Gastrocnemius medialis (tissue), 4 donors: ENCODE measurements at regions of chr7 and their contacts with region 1.

Region 1: GRCh38 chr7:1193593-1194424 is 33.8 kb upstream of the ZFAND2A start:
- DNase-seq: no peak
- ATAC-seq: no peak
- H3K4me3 ChIP-seq: no peak overlapping the region
- H3K27ac ChIP-seq: no peak overlapping the region
- H3K4me1 ChIP-seq: peaks cover 0 to 5% of the 10 kb centered on the region in 2 donors
- H3K27me3 ChIP-seq: peaks cover 37 to 55% (median 51%) of the 10 kb centered on the region in 3 donors
- CTCF ChIP-seq: peak in 3 of 5 experiments; percentile 18 to 47 (median 44)
- POLR2A ChIP-seq: no peak

Region 2: DNA sequence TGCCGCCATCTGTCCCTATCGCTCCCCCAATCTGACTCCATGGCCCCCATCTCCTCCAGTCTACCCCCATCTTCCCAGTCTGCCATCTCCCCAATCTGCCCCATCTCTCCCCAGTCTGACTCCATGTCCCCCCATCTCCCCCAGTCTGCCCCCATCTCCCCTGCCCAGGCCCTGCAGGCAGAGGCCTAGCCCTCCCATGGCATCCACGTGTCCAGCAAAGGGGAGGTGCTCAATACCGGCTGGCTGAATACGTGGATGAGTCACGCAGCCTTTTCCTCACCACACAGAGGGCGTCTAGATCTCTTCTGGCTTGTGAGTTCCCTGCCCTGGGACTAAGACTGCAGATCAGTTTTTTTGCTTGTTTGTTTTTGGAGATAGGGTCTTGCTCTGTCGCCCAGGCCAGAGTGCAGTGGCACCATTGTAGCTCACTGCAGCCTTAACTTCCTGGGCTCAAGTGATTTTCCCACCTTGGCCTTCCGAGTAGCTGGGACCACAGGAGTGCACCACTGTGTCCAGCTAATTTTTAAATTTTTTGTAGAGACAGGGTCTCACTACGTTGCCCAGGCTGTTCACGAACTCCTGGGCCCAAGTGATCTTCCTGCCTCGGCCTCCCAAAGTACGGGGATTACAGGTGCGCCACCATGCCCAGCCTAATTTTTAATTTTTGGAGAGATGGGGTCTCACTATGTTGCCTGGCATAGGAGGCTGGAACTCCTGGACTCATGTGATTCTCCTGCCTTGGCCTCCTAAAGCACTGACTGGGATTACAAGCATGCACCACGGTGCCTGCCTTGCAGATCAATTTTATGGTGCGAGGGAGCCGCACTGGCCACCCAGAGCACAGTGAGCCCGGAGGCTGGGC is 164.8 kb before region 1 on chr7:
- in situ Hi-C with region 1: no loop called
- intact Hi-C with region 1: no loop called
- DNase-seq: peak; percentile 85 to 92
- ATAC-seq: peak; percentile 95
- H3K4me3 ChIP-seq: peak overlapping the region; percentile 62 to 91 (median 74)
- H3K27ac ChIP-seq: peak overlapping the region; percentile 93 to 98 (median 97)
- H3K4me1 ChIP-seq: peaks cover 18 to 26% of the 10 kb centered on the region in 2 donors
- H3K27me3 ChIP-seq: no peaks in the 10 kb centered on the region
- CTCF ChIP-seq: no peak
- POLR2A ChIP-seq: no peak

Region 3: GRCh38 chr7:1412322-1413261 is 218.8 kb after region 1 on chr7:
- in situ Hi-C with region 1: no loop called
- intact Hi-C with region 1: loop called (anchors 2 kb)
- DNase-seq: peak; percentile 9 to 59
- ATAC-seq: peak; percentile 55 to 93
- H3K4me3 ChIP-seq: no peak overlapping the region
- H3K27ac ChIP-seq: no peak overlapping the region
- H3K4me1 ChIP-seq: no peaks in the 10 kb centered on the region
- H3K27me3 ChIP-seq: peaks cover 28 to 56% (median 37%) of the 10 kb centered on the region in 3 donors
- CTCF ChIP-seq: peak; percentile 38 to 75 (median 59)
- POLR2A ChIP-seq: no peak